Activated B cell treated with CpG ODN at 0.5 μM for 24 hours (primary cell): ENCODE measurements at regions of chr19 and their contacts with region 1.

Region 1: DNA sequence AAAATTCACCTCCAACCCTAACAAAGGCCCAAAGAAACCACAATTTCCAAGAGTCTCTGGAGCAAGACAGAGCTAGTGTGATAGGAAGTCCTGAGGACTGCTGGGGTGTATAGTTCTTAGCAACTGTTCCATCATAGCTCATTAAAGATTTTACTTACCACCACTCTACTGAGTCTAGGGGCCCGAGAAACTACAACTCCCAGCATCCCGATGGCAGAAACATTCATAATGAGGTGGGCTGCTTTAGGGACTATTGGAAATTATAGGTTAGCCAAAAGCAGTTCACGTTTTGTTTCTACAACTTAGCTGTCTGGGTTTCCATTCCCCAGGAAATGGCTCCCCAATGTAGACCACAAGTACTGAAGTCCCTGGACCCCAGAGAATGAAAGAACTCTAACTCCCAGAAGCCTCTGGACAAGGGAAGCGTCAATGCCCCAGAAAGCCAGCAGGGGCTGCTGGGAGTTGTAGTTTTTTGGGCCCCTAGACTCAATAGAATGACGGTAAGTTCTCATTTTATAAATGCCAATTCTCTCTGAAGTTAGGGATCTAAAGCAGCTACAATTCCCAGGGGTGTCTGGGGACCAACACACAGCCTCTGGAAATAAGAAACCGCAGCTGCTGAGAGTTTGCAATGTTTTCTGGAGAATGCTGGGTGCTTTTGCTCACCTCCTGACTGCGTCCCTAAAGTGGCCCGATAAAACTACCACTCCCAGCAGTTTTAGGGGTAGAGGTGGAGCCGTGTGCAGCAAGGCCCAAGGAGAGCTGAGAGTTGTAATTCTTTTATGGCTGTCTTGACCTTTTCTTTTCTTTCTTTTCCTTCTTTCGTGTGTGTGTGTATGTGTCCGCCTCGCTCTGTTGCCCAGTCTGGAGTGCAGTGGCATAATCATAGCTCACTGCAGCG is 11.1 kb downstream of the FTL start:
- DNase-seq: no peak
- ATAC-seq: peak; percentile 64
- H3K4me3 Mint-ChIP-seq: no peak overlapping the region
- H3K27ac Mint-ChIP-seq: no peak overlapping the region
- H3K4me1 Mint-ChIP-seq: peaks cover 8% of the 10 kb centered on the region
- H3K27me3 Mint-ChIP-seq: no peaks in the 10 kb centered on the region
- CTCF ChIP-seq: no peak

Region 2: DNA sequence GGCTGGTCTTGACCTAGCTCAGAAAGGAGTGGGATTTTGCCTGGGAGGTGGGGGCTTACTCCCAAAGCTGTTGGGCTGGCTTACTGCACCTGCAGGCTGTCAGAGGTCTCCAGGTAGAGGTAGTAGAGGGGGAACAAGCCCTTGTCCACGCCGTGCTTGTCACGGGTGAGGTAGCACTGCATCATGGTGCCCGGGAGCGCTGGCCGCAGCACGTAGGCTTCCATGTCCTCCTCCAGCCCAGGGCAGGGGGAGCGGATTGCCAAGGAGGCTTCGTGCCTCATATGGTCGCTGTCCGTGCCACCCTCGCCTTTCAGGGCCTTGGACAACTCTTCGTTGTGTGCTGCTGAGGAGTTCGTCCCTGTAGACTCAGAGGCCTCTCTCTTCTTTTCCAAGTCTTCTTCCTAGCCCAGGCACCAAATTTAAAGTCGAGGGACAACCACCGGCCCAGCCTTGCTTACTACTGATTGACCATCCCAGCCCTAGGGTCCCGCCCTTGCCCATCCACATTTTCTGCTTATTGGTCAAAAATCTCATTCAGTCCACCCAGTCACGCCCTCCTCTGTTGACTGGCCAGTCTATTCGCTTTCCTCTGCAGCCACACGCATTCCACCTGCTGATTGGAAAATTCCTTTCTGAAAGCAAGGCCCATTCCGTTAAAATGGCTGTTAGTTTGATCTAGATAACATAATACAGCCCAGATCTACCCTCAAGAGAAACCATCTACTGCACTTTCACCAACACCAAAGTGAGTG is 88.2 kb before region 1 on chr19:
- CTCF ChIA-PET with region 1: no interaction called
- POLR2A ChIA-PET with region 1: interaction called, 17 read pairs
- intact Hi-C with region 1: no loop called
- DNase-seq: no peak
- ATAC-seq: no peak
- H3K4me3 Mint-ChIP-seq: no peak overlapping the region
- H3K27ac Mint-ChIP-seq: no peak overlapping the region
- H3K4me1 Mint-ChIP-seq: peaks cover 11% of the 10 kb centered on the region
- H3K27me3 Mint-ChIP-seq: no peaks in the 10 kb centered on the region
- CTCF ChIP-seq: no peak

Region 3: GRCh38 chr19:49014123-49014869 is 38.1 kb after region 1 on chr19:
- CTCF ChIA-PET with region 1: no interaction called
- POLR2A ChIA-PET with region 1: no interaction called
- intact Hi-C with region 1: no loop called
- DNase-seq: no peak
- ATAC-seq: no peak
- H3K4me3 Mint-ChIP-seq: no peak overlapping the region
- H3K27ac Mint-ChIP-seq: no peak overlapping the region
- H3K4me1 Mint-ChIP-seq: peaks cover 14% of the 10 kb centered on the region
- H3K27me3 Mint-ChIP-seq: peaks cover 2% of the 10 kb centered on the region
- CTCF ChIP-seq: no peak